ENCODE measurements at regions of chr1 and their contacts with region 1.

Region 1: DNA sequence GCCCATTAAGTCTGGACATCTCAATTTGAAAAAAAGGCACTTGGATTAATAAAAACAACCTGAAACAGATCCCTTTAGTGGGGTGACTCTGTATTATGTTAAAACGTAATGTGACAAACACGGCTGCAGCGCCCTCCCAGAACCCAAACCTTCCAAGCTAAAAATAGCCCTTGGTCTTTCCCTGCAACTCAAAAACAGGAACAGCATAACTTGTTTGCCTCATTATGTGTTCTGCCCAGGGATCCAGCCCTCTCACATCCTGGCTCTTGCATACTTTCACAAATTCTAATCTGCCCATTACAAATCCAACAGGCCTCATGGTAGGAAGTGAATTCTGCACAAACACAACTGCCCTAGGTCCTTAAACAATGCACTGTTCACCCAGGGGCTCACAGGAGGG is 94.7 kb upstream of the GADD45A start:
- DNase-seq: peak; percentile 35 to 51
- ATAC-seq: peak; percentile 87 to 88
- H3K4me3 ChIP-seq: no peak overlapping the region
- H3K27ac ChIP-seq: peak overlapping the region; percentile 44 to 66 (median 56)
- H3K4me1 ChIP-seq: peaks cover 14 to 26% of the 10 kb centered on the region in 2 donors
- H3K27me3 ChIP-seq: no peaks in the 10 kb centered on the region
- CTCF ChIP-seq: no peak
- POLR2A ChIP-seq: peak in 1 of 2 donors; percentile 40

Region 2: DNA sequence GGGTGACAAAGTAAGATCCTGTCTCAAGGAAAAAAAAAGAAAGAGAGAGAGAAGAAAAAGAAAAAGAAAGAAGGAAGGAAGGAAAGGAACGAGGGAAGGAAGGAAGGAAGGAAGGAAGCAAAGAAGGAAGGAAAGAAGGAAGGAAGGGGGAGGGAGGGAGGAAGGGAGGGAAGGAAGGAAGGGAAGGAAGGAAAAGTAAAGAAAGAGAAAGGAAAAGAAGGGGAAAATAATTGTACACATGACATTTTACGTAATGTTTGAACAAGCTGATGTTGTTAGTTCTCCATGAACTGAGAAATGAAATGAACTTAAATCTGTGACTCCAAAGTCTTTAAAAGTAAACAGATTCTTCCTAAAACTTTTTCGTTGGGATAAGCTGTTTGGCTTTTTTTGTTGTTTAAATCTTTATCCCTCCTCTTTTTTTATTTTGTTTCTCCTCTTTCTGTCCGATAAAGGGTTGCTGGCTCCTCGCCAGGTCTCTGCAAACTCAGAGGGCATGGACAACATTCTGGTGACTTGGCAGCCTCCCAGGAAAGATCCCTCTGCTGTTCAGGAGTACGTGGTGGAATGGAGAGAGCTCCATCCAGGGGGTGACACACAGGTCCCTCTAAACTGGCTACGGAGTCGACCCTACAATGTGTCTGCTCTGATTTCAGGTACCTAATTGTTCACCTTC is 222.8 kb before region 1 on chr1:
- in situ Hi-C with region 1: no loop called
- intact Hi-C with region 1: no loop called
- DNase-seq: peak in 1 of 2 donors; percentile 34
- ATAC-seq: no peak
- H3K4me3 ChIP-seq: no peak overlapping the region
- H3K27ac ChIP-seq: no peak overlapping the region
- H3K4me1 ChIP-seq: peaks cover 17 to 19% of the 10 kb centered on the region in 2 donors
- H3K27me3 ChIP-seq: no peaks in the 10 kb centered on the region
- CTCF ChIP-seq: peak in 1 of 5 experiments; percentile 3
- POLR2A ChIP-seq: no peak

Region 3: GRCh38 chr1:67561704-67562113 is 28.6 kb before region 1 on chr1:
- in situ Hi-C with region 1: no loop called
- intact Hi-C with region 1: no loop called
- DNase-seq: peak; percentile 94 to 99
- ATAC-seq: peak; percentile 90 to 91
- H3K4me3 ChIP-seq: peak overlapping the region in 2 of 4 donors; percentile 0 to 19
- H3K27ac ChIP-seq: peak overlapping the region; percentile 88 to 94 (median 90)
- H3K4me1 ChIP-seq: peaks cover 27 to 48% of the 10 kb centered on the region in 2 donors
- H3K27me3 ChIP-seq: no peaks in the 10 kb centered on the region
- CTCF ChIP-seq: peak; percentile 90 to 95 (median 95)
- POLR2A ChIP-seq: peak in 1 of 2 donors; percentile 38

Region 4: DNA sequence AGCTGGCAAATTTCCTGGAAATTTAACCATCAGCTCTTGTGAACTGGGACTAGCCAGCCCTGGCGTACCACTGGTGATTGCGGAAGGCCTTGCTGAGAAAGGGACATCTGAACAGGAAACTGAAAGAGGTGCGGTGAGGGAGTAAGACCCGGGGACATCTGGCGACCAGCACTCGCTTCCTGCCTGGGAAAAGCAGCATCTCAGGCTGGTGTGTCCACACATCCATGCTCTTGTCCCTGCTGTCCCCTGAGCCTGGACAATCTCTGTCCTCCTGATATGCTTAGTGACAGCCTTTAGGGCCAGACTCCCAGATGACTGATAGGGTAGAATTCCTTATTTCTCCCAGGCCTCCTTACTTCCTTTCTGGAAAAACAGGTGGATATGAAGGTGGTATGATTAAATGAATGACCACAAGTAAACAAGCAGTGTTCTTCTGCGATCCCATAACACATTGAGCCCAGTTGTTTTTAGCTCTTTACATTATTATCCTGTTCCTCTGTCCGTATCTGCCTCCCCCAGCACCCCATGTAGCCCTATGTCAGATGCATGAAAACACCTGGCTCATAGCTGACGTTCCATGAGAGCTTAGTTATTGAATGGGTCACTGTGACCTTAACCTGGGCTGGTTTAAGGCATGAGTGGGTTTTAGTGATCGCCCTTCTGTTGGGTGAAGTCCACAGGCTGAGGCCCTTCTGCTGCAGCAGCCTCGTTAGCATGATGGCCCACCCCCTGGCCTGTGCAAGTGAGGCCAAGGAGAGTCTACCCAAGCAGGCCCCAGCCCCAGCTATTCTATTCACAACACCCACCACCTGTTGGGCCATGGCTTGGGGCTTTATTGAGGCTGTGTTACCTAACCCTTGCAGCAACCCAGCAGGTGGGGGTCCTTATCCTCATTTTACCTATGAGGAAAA is 18.6 kb after region 1 on chr1:
- in situ Hi-C with region 1: no loop called
- intact Hi-C with region 1: loop called (anchors 2 kb)
- DNase-seq: no peak
- ATAC-seq: no peak
- H3K4me3 ChIP-seq: no peak overlapping the region
- H3K27ac ChIP-seq: no peak overlapping the region
- H3K4me1 ChIP-seq: no peaks in the 10 kb centered on the region
- H3K27me3 ChIP-seq: no peaks in the 10 kb centered on the region
- CTCF ChIP-seq: no peak
- POLR2A ChIP-seq: no peak

Region 5: DNA sequence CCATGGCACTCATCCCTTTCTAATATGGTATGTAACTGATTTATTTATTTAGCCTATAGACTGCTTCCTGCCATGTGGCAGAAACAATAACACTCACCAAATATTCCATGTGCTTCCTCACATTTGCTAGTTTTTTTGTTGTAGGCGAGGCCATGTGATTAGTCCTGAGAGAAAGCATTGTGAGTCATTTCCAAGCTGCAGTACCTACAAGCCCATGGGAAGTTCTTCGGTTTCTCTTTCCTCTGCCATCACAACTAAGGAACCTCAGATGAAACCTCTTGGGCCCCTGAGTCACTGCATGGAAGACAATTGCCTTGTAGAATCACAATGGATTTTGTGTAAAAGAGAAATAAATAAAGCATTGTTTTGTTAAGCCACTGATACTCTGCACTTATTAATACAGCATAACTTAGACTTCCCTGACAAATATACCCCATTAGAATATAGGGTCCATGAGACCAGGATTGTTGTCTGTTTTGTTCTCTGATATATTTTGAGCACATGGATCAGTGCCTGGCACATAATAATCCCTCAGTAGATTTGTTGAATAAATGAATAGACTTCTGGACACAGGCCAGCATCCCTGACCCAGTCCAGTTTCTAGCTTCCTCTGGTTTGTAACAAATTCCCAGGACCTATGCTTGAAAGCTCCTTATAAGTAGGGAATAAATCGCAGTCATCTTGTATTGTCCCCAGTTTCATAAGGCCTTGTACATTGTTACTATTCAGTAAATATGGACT is 36.3 kb after region 1 on chr1:
- in situ Hi-C with region 1: no loop called
- intact Hi-C with region 1: no loop called
- DNase-seq: no peak
- ATAC-seq: no peak
- H3K4me3 ChIP-seq: no peak overlapping the region
- H3K27ac ChIP-seq: no peak overlapping the region
- H3K4me1 ChIP-seq: peaks cover 10% of the 10 kb centered on the region in 2 donors
- H3K27me3 ChIP-seq: no peaks in the 10 kb centered on the region
- CTCF ChIP-seq: no peak
- POLR2A ChIP-seq: no peak

Region 6: GRCh38 chr1:67766141-67766978 is 176.0 kb after region 1 on chr1:
- in situ Hi-C with region 1: no loop called
- intact Hi-C with region 1: no loop called
- DNase-seq: peak in 1 of 2 donors; percentile 16
- ATAC-seq: peak; percentile 53 to 68
- H3K4me3 ChIP-seq: peak overlapping the region in 3 of 4 donors; percentile 21 to 48 (median 39)
- H3K27ac ChIP-seq: no peak overlapping the region
- H3K4me1 ChIP-seq: peaks cover 0 to 6% of the 10 kb centered on the region in 2 donors
- H3K27me3 ChIP-seq: no peaks in the 10 kb centered on the region
- CTCF ChIP-seq: peak; percentile 64 to 85 (median 75)
- POLR2A ChIP-seq: no peak